ENCODE measurements at regions of chr10 and their contacts with region 1.

Region 1: GRCh38 chr10:79502561-79503309 is 9.6 kb upstream of the EIF5AL1 start:
- DNase-seq: no peak
- H3K4me3 ChIP-seq: no peak overlapping the region
- H3K27ac ChIP-seq: no peak overlapping the region
- H3K27me3 ChIP-seq: no peaks in the 10 kb centered on the region
- CTCF ChIP-seq: peak; percentile 39; the same call in 1 of the 2 replicates

Region 2: GRCh38 chr10:79223091-79224048 is 279.4 kb before region 1 on chr10:
- CTCF ChIA-PET with region 1: no interaction called
- POLR2A ChIA-PET with region 1: no interaction called
- DNase-seq: no peak
- H3K4me3 ChIP-seq: no peak overlapping the region
- H3K27ac ChIP-seq: peak overlapping the region; percentile 57
- H3K27me3 ChIP-seq: no peaks in the 10 kb centered on the region
- CTCF ChIP-seq: no peak

Region 3: DNA sequence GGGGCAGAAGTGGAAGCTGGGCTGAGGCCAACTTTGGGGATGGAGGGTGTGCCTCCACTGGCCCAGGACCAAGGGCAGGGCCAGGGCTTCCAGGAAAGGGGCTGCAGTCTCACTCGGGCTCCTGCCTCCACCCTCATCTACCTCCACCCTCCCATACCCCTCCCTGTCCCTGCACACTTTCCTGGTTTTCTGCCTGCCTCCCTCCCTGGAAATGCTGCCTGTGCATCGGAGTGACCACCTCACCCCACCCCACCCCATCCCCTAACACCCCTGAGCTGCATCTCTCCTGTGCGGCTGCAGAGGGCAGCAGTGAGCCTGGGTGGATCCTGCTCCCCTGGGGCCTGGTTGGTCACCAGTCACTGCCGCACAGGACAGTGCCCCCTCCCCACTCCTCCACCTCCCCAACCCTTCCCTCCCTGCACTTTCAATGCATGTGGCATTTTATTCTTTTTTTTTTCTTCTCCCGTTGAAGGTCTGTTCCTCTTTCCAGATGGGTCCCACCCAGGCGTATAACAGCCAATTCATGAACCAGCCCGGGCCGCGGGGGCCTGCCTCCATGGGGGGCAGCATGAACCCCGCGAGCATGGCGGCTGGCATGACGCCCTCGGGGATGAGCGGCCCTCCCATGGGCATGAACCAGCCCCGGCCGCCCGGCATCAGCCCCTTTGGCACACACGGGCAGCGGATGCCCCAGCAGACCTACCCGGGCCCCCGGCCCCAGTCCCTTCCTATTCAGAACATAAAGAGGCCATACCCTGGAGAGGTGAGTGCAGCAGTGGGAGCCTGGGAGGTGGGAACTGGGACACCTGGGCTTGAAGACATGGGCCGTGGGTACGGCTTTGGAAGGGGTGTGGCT is 209.6 kb before region 1 on chr10:
- CTCF ChIA-PET with region 1: no interaction called
- POLR2A ChIA-PET with region 1: no interaction called
- DNase-seq: no peak
- H3K4me3 ChIP-seq: no peak overlapping the region
- H3K27ac ChIP-seq: peak overlapping the region; percentile 47
- H3K27me3 ChIP-seq: no peaks in the 10 kb centered on the region
- CTCF ChIP-seq: peak; percentile 50

Region 4: DNA sequence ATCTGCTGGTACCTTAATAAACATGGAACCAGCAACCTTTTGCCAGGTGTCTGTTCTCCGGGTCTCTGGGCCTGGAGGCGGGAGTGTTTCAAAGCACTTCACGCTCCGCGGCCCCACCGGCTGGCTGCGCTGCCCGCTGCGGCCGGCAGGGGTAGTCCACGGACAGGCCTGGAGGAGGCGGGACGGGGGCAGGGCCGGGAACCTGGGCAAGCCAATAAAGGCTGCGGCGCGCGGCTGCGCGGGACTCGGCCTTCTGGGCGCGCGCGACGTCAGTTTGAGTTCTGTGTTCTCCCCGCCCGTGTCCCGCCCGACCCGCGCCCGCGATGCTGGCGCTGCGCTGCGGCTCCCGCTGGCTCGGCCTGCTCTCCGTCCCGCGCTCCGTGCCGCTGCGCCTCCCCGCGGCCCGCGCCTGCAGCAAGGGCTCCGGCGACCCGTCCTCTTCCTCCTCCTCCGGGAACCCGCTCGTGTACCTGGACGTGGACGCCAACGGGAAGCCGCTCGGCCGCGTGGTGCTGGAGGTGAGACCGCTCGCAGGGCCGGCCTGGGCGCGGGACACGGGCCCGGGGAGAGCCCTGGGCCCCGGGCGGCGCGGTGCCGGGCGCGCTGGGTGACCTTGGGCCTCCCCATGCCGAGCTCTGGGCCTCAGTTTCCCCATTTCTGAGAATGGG is 155.4 kb before region 1 on chr10 and contains the start of gene PPIF:
- CTCF ChIA-PET with region 1: no interaction called
- POLR2A ChIA-PET with region 1: interaction called, 15 read pairs
- DNase-seq: peak; percentile 55
- H3K4me3 ChIP-seq: peak within 1 kb of the TSS; percentile 79
- H3K27ac ChIP-seq: peak within 1 kb of the TSS; percentile 87
- H3K27me3 ChIP-seq: no peaks in the 10 kb centered on the region
- CTCF ChIP-seq: peak; percentile 86
- polyA plus RNA-seq, gene PPIF: 68.6 and 77.2 TPM in 2 replicates

Region 5: GRCh38 chr10:79542626-79543025 is 39.9 kb after region 1 on chr10:
- CTCF ChIA-PET with region 1: no interaction called
- POLR2A ChIA-PET with region 1: no interaction called
- DNase-seq: no peak
- H3K4me3 ChIP-seq: no peak overlapping the region
- H3K27ac ChIP-seq: no peak overlapping the region
- H3K27me3 ChIP-seq: peaks cover 5% of the 10 kb centered on the region
- CTCF ChIP-seq: no peak

Region 6: GRCh38 chr10:79929409-79929904 is 426.7 kb after region 1 on chr10:
- CTCF ChIA-PET with region 1: no interaction called
- POLR2A ChIA-PET with region 1: no interaction called
- DNase-seq: peak; percentile 7
- H3K4me3 ChIP-seq: no peak overlapping the region
- H3K27ac ChIP-seq: no peak overlapping the region
- H3K27me3 ChIP-seq: peaks cover 8% of the 10 kb centered on the region
- CTCF ChIP-seq: peak; percentile 86